Dorsolateral prefrontal cortex (tissue), 120 donors: ENCODE measurements at regions of chr7 and their contacts with region 1.

Region 1: GRCh38 chr7:43248961-43249822 is 136.7 kb downstream of the HECW1 start:
- DNase-seq: peak in 5 of 10 donors; percentile 45 to 63 (median 49)
- H3K4me3 ChIP-seq: peak overlapping the region in 53 of 59 donors; percentile 3 to 57 (median 39)
- H3K27ac ChIP-seq: peak overlapping the region in 58 of 59 donors; percentile 26 to 94 (median 82)
- H3K27me3 ChIP-seq: no peaks in the 10 kb centered on the region
- CTCF ChIP-seq: no peak

Region 2: DNA sequence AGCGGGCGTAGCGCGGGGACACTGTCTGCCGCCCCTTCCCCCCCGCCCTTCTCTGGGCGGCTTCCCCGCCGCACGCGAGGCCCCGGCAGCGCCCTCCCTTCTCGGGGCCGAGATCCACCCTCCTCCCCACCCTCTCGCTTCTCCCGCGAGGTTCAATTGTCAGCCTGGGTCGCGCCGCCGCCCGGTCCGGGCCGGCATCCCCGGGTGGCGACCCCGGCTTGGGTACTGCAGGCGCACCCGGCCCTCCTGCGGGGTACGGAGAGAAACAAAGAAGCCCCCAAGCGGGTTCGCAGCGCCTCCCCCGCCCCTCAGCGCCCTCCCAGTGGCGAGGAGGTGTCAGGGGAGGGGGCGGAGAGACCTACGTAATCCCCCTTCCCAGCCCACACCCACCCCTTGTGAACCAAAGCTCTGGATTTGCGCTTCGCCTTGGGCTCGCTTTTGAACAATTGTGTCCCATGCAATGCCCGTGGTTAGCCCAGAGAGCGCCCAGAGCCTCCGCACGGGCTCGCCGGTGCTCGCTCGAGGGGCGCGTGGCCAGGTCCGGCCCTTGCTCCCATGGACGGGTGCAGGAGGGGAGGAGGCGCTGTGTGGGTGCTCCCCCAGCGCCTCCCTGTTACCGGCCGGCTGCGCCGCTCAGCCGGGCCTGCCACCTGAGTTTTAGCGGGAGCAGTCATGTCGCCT is 136.1 kb before region 1 on chr7:
- intact Hi-C with region 1: loop called in 1 of 2 experiments (anchors 5 kb)
- DNase-seq: peak in 3 of 10 donors; percentile 21 to 51 (median 37)
- H3K4me3 ChIP-seq: peak overlapping the region; percentile 43 to 79 (median 69)
- H3K27ac ChIP-seq: peak overlapping the region in 57 of 59 donors; percentile 24 to 92 (median 83)
- H3K27me3 ChIP-seq: peaks cover 0 to 74% (median 27%) of the 10 kb centered on the region in 45 donors
- CTCF ChIP-seq: no peak

Region 3: GRCh38 chr7:43888993-43889945 is 640.1 kb after region 1 on chr7:
- intact Hi-C with region 1: no loop called
- DNase-seq: no peak
- H3K4me3 ChIP-seq: no peak overlapping the region
- H3K27ac ChIP-seq: peak overlapping the region in 9 of 59 donors; percentile 1 to 28 (median 14)
- H3K27me3 ChIP-seq: no peaks in the 10 kb centered on the region
- CTCF ChIP-seq: no peak